H1 (cell line): ENCODE measurements at regions of chr1 and their contacts with region 1.

Region 1: DNA sequence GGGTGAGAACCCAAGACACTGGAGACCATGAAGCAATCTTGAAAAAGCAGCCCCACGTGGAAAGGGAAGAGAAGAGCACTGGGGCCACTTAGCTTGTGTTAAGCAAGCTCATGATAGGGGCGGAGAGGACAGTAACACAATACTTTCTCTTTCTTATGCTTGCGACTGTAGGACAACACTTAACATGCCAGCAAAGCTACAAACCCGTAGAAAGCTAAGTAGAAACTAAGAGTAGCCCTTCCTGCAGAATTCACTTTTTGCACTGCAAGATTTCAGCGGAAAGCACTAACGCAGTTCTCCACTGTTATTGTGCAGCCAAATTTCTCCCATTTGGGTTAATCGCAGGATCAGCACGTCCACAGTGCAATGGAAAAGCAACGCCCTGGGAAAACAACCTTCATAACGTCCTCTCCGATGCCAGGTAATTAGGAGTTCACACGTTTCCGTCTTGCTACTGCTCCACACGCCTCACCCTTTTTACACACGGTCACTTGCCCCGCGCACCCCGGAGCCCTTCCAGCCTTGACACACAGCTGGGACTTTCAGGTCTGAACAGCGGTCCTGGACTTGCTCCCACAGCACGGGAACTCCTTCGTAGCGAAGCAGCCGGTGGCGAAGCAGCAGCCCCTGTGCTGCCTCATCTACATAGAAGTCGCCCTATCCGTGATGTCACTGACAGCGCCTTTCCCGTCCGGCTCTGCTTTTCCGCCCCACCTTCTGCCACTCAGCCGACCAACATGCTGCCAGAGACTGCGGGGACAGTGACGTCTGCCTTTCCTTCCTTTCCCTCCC is 148.6 kb downstream of the PPIAL4G start:
- DNase-seq: peak; percentile 84 to 86
- H3K4me3 ChIP-seq: peak overlapping the region; percentile 45 to 69 (median 62)
- H3K27ac ChIP-seq: peak overlapping the region; percentile 100
- H3K4me1 ChIP-seq: no peaks in the 10 kb centered on the region
- H3K27me3 ChIP-seq: no peaks in the 10 kb centered on the region
- CTCF ChIP-seq: peak in 1 of 3 experiments; percentile 0; a peak in 1 of 4 replicates
- EP300 ChIP-seq: peak in 1 of 2 experiments; percentile 82; a peak in 1 of 3 replicates
- POLR2A ChIP-seq: peak; percentile 100
- RAD21 ChIP-seq: peak in 1 of 2 experiments; percentile 23; a peak in 1 of 4 replicates

Region 2: DNA sequence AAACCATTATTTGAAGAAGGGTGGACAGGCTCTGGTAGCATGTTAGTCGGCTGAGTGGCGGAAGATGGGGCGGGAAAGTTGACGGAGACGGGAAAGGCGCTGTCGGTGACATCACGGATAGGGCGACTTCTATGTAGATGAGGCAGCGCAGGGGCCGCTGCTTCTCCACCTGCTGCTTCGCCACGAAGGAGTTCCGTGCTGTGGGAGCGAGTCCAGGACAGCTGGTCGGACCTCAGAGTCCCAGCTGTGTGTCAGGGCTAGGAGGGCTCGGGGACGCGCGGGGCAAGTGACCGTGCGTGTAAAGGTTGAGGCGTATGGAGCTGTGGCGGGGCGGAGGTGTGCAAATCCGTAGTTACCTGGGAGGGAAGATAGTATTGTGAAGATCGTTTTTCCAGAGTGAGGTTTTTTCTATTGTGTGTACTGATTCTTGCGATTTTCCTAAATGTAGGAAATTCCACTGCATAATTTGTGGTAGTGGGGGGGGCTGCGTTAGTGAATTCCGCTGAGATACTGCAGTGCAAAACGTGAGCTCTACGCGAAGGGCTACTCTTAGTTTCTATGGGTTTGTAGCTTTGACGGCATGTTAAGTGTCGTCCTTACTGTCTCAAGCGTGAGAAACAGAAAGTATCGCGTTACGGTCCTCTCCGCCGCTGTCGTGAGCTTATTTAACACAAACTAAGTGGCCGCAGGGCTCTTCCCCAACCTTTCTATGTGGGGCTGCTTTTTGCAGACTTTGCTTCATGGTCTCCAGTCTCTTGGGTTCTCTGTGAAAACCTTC is 71.2 kb before region 1 on chr1:
- CTCF ChIA-PET with region 1: no interaction called
- POLR2A ChIA-PET with region 1: interaction called, 136 read pairs
- DNase-seq: peak; percentile 86 to 93
- H3K4me3 ChIP-seq: peak overlapping the region; percentile 52 to 76 (median 64)
- H3K27ac ChIP-seq: peak overlapping the region; percentile 100
- H3K4me1 ChIP-seq: no peaks in the 10 kb centered on the region; a peak in 1 of 7 replicates
- H3K27me3 ChIP-seq: no peaks in the 10 kb centered on the region
- CTCF ChIP-seq: peak in 1 of 3 experiments; percentile 3; a peak in 1 of 4 replicates
- EP300 ChIP-seq: peak in 1 of 2 experiments; percentile 84; a peak in 1 of 3 replicates
- POLR2A ChIP-seq: peak; percentile 100
- RAD21 ChIP-seq: 0 out of 4 replicates have a peak, but pooled peaks have one; percentile 2 to 11

Region 3: GRCh38 chr1:148307583-148308190 is 26.8 kb before region 1 on chr1:
- CTCF ChIA-PET with region 1: no interaction called
- POLR2A ChIA-PET with region 1: interaction called, 31 read pairs
- DNase-seq: no peak
- H3K4me3 ChIP-seq: no peak overlapping the region
- H3K27ac ChIP-seq: no peak overlapping the region
- H3K4me1 ChIP-seq: no peaks in the 10 kb centered on the region
- H3K27me3 ChIP-seq: peaks cover 9 to 39% (median 24%) of the 10 kb centered on the region in 4 experiments
- CTCF ChIP-seq: no peak
- EP300 ChIP-seq: no peak
- POLR2A ChIP-seq: no peak
- RAD21 ChIP-seq: no peak

Region 4: DNA sequence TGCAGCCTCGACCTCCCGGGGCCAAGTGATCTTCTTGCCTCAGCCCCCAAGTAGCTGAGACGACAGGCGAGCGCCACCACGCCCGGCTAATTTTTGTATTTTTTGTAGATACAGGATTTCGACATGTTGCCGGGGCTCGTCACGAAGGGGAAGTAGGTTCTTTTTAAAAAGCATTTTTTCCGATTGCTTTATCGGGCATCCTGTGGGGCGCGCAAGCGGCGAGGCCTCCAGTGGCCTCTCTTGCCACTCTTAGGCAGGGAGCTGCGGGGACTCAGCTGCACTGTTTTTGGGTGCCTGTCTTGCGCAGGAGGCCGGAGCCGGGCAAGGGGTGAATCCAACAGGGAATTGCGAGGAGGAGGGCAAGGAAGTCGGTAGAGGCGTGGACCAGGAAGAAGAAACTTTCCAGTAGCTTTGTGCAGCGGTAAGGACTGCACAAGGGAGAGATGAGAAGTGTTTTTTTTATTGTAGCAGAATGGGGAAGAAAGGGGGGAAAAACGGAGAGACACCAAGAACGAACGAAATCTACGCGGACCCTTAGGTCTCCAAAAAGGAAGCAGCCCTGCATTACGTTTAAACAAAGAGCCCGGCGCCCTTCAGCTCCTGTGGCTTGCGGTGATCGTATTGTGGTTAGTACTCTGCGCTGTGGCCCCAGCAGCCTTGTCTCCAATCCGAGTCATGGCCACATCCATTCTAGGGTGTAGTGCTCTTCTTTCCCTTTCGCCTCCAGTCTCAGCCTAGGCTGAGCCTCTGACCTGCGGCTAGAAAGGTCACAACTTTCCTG is 16.2 kb before region 1 on chr1:
- CTCF ChIA-PET with region 1: interaction called, 3 read pairs
- POLR2A ChIA-PET with region 1: interaction called, 27 read pairs
- DNase-seq: peak in 1 of 2 experiments; percentile 63
- H3K4me3 ChIP-seq: peak overlapping the region; percentile 67 to 73 (median 70)
- H3K27ac ChIP-seq: no peak overlapping the region
- H3K4me1 ChIP-seq: peaks cover 0 to 3% (median 1%) of the 10 kb centered on the region in 4 experiments; a peak in 2 of 7 replicates
- H3K27me3 ChIP-seq: peaks cover 4 to 18% (median 11%) of the 10 kb centered on the region in 4 experiments; a peak in 6 of 7 replicates
- CTCF ChIP-seq: no peak
- EP300 ChIP-seq: no peak
- POLR2A ChIP-seq: peak in 1 of 2 experiments; percentile 52; a peak in 2 of 3 replicates
- RAD21 ChIP-seq: no peak

Region 5: GRCh38 chr1:148347781-148348180 is 13.2 kb after region 1 on chr1:
- CTCF ChIA-PET with region 1: interaction called, 9 read pairs
- POLR2A ChIA-PET with region 1: interaction called, 55 read pairs
- DNase-seq: no peak
- H3K4me3 ChIP-seq: no peak overlapping the region
- H3K27ac ChIP-seq: no peak overlapping the region
- H3K4me1 ChIP-seq: peaks cover 0 to 3% (median 0%) of the 10 kb centered on the region in 4 experiments; a peak in 1 of 7 replicates
- H3K27me3 ChIP-seq: peaks cover 0 to 4% (median 3%) of the 10 kb centered on the region in 4 experiments; a peak in 4 of 7 replicates
- CTCF ChIP-seq: no peak
- EP300 ChIP-seq: no peak
- POLR2A ChIP-seq: no peak
- RAD21 ChIP-seq: no peak

Region 6: GRCh38 chr1:148353461-148354283 is 19.1 kb after region 1 on chr1:
- CTCF ChIA-PET with region 1: interaction called, 3 read pairs
- POLR2A ChIA-PET with region 1: interaction called, 55 read pairs
- DNase-seq: no peak
- H3K4me3 ChIP-seq: peak overlapping the region; percentile 63 to 83 (median 76)
- H3K27ac ChIP-seq: no peak overlapping the region; the same call in 1 of the 2 replicates
- H3K4me1 ChIP-seq: peaks cover 0 to 4% (median 1%) of the 10 kb centered on the region in 4 experiments; a peak in 2 of 7 replicates
- H3K27me3 ChIP-seq: peaks cover 9 to 29% (median 21%) of the 10 kb centered on the region in 4 experiments
- CTCF ChIP-seq: no peak
- EP300 ChIP-seq: no peak
- POLR2A ChIP-seq: peak in 1 of 2 experiments; percentile 47; a peak in 1 of 3 replicates
- RAD21 ChIP-seq: no peak

Region 7: GRCh38 chr1:148388260-148389027 is 53.9 kb after region 1 on chr1:
- CTCF ChIA-PET with region 1: no interaction called
- POLR2A ChIA-PET with region 1: interaction called, 15 read pairs
- DNase-seq: peak; percentile 87
- H3K4me3 ChIP-seq: peak overlapping the region; percentile 46 to 65 (median 52)
- H3K27ac ChIP-seq: peak overlapping the region; percentile 65
- H3K4me1 ChIP-seq: peaks cover 0 to 4% (median 0%) of the 10 kb centered on the region in 4 experiments; a peak in 2 of 7 replicates
- H3K27me3 ChIP-seq: no peaks in the 10 kb centered on the region
- CTCF ChIP-seq: no peak
- EP300 ChIP-seq: no peak
- POLR2A ChIP-seq: peak; percentile 87 to 99
- RAD21 ChIP-seq: no peak